ENCODE measurements at regions of chr9 and their contacts with region 1.

Region 1: DNA sequence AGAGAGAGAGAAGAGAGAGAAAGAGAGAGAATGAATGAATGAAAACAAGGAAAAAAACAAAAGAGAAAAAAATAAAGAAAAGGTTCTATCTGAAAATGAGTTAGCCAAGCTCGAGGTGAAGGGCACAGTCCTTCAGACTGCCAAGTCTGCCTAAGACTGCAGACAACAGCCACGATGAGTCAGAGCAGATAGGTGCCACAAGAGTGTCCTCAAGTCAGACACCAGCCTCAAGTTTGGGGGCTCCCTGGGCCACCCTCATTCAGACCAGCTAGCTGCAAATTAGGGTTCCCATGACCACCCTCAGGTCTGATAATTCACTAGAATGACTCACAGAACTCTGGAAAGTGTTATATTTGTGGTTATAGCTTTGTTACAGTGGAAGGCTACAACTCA is 13.9 kb upstream of the HABP4 start:
- DNase-seq: no peak
- H3K4me3 Mint-ChIP-seq: no peak overlapping the region
- H3K27ac Mint-ChIP-seq: no peak overlapping the region
- H3K4me1 Mint-ChIP-seq: no peaks in the 10 kb centered on the region
- H3K27me3 Mint-ChIP-seq: no peaks in the 10 kb centered on the region
- CTCF ChIP-seq: no peak

Region 2: GRCh38 chr9:96363175-96363967 is 72.7 kb before region 1 on chr9:
- CTCF ChIA-PET with region 1: no interaction called
- POLR2A ChIA-PET with region 1: no interaction called
- intact Hi-C with region 1: no loop called
- DNase-seq: no peak
- H3K4me3 Mint-ChIP-seq: no peak overlapping the region
- H3K27ac Mint-ChIP-seq: no peak overlapping the region
- H3K4me1 Mint-ChIP-seq: no peaks in the 10 kb centered on the region
- H3K27me3 Mint-ChIP-seq: no peaks in the 10 kb centered on the region
- CTCF ChIP-seq: no peak

Region 3: GRCh38 chr9:96425500-96426169 is 10.4 kb before region 1 on chr9:
- CTCF ChIA-PET with region 1: interaction called, 4 read pairs
- POLR2A ChIA-PET with region 1: interaction called, 21 read pairs
- intact Hi-C with region 1: no loop called
- DNase-seq: no peak
- H3K4me3 Mint-ChIP-seq: no peak overlapping the region
- H3K27ac Mint-ChIP-seq: no peak overlapping the region
- H3K4me1 Mint-ChIP-seq: peaks cover 6% of the 10 kb centered on the region
- H3K27me3 Mint-ChIP-seq: no peaks in the 10 kb centered on the region
- CTCF ChIP-seq: no peak

Region 4: DNA sequence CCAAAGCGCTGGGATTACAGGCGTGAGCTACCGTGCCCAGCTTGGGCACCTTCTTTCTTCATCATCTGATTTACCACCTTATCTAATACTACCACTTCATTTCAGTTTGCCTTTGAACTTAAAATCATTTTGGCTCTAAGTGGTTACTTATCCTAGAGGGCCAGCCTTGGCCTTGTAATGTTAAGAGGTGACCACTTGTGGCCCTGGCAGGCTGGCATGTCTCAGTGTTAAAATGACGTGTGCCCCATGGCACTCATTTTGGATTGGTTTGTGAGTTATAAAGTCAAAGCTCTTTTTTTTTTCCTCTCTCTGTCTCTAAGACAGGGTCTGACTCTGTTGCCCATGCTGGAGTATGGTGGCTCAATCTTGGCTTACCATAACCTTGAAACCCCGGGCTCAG is 31.7 kb after region 1 on chr9:
- CTCF ChIA-PET with region 1: no interaction called
- POLR2A ChIA-PET with region 1: no interaction called
- intact Hi-C with region 1: no loop called
- DNase-seq: no peak
- H3K4me3 Mint-ChIP-seq: no peak overlapping the region
- H3K27ac Mint-ChIP-seq: no peak overlapping the region
- H3K4me1 Mint-ChIP-seq: no peaks in the 10 kb centered on the region
- H3K27me3 Mint-ChIP-seq: no peaks in the 10 kb centered on the region
- CTCF ChIP-seq: no peak

Region 5: DNA sequence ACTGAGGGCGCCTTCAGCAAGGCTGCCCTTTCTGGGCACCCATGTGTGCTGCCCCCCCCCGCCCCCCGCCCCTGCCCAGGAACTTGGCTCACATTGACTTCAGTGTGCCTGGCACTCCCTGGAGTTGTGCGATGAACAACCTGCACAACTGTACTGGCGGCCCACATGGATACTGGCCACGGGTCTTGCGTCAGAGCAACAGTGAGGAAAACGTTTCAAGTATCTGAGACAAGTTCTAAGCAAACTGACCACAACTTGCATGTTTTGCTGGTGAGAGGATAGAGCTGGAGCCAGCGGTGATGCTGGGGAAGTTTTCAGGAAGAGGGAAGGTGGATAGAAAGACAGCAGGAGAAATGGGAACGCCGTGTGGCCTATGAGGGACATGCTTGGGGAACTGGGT is 59.3 kb after region 1 on chr9:
- CTCF ChIA-PET with region 1: no interaction called
- POLR2A ChIA-PET with region 1: no interaction called
- intact Hi-C with region 1: no loop called
- DNase-seq: peak; percentile 38
- H3K4me3 Mint-ChIP-seq: no peak overlapping the region
- H3K27ac Mint-ChIP-seq: no peak overlapping the region
- H3K4me1 Mint-ChIP-seq: no peaks in the 10 kb centered on the region
- H3K27me3 Mint-ChIP-seq: no peaks in the 10 kb centered on the region
- CTCF ChIP-seq: no peak

Region 6: DNA sequence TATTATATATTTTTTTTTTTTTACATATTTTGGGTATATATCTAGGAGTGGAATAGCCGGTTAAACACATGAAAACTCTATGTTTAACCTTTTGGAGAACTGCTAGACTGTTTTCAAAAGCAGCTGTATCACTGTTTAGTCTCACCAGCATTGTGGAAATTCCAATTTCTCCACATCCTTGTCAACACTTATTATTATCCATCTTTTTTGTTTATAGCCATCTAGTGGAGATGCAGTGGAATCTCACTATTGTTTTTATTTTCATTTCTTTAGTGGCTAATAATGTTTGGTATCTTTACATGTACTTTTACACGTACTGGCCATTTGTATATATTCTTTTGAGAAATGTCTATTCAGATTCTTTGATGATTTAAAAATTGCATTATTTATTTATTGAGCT is 848.7 kb after region 1 on chr9:
- CTCF ChIA-PET with region 1: no interaction called
- POLR2A ChIA-PET with region 1: no interaction called
- intact Hi-C with region 1: no loop called
- DNase-seq: no peak
- H3K4me3 Mint-ChIP-seq: no peak overlapping the region
- H3K27ac Mint-ChIP-seq: no peak overlapping the region
- H3K4me1 Mint-ChIP-seq: no peaks in the 10 kb centered on the region
- H3K27me3 Mint-ChIP-seq: no peaks in the 10 kb centered on the region
- CTCF ChIP-seq: no peak